OCI-LY7 (cell line): ENCODE measurements at regions of chr10 and their contacts with region 1.

Region 1: DNA sequence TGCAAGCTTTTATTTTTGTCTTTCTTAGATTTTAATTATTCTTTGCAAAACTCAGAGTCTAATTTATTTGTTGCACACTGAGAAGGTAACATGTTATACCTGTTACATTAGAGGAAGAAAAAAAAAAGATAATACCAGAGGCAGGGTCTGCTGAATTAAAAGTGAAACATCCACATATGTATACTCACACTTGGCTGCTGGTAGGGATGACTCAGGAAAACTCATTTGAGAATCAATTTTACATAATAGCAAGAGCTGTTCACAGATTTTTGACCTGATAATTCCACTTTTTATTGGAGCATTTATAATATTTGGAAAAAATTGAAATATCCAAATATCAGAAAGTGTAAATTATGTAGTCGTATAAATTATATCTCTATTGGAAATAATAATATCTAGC is 78.1 kb upstream of the CCDC6 start:
- DNase-seq: no peak
- H3K4me3 ChIP-seq: no peak overlapping the region
- H3K27ac ChIP-seq: no peak overlapping the region
- H3K4me1 ChIP-seq: no peaks in the 10 kb centered on the region
- CTCF ChIP-seq: no peak

Region 2: GRCh38 chr10:59857049-59857448 is 127.4 kb before region 1 on chr10:
- CTCF ChIA-PET with region 1: no interaction called
- POLR2A ChIA-PET with region 1: no interaction called
- intact Hi-C with region 1: no loop called
- DNase-seq: no peak
- H3K4me3 ChIP-seq: no peak overlapping the region
- H3K27ac ChIP-seq: no peak overlapping the region
- H3K4me1 ChIP-seq: peaks cover 10% of the 10 kb centered on the region
- CTCF ChIP-seq: no peak

Region 3: GRCh38 chr10:59970396-59971368 is 13.7 kb before region 1 on chr10:
- CTCF ChIA-PET with region 1: no interaction called
- POLR2A ChIA-PET with region 1: interaction called, 15 read pairs
- intact Hi-C with region 1: no loop called
- DNase-seq: peak; percentile 27
- H3K4me3 ChIP-seq: no peak overlapping the region
- H3K27ac ChIP-seq: no peak overlapping the region
- H3K4me1 ChIP-seq: peaks cover 7% of the 10 kb centered on the region
- CTCF ChIP-seq: peak; percentile 60